CD4-positive, alpha-beta T cell (primary cell): ENCODE measurements at regions of chr3 and their contacts with region 1.

Region 1: DNA sequence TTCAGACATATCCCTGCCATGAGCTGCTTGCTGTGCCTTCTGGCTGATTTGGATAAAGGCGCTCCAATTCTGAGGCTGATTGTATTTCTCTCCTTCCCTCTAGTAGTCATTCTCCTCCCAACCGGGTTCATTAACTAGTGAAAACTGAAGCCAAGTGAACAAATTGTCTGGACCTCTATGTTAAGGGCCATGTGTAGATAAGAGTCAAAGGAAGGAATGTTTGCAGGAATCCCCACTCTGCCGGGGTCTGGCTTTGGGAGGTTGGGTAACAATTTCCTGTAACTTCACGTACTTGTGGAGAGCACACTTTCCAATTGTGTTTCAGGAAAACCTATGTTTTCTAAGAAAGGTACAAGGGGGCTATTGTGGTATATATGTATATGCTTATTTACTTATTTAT is 38.2 kb upstream of the SUCLG2 start:
- DNase-seq: no peak
- ATAC-seq: no peak
- H3K4me3 ChIP-seq: no peak overlapping the region
- H3K4me3 Mint-ChIP-seq: no peak overlapping the region
- H3K27ac ChIP-seq: no peak overlapping the region
- H3K27ac Mint-ChIP-seq: no peak overlapping the region
- H3K4me1 ChIP-seq: no peaks in the 10 kb centered on the region
- H3K4me1 Mint-ChIP-seq: no peaks in the 10 kb centered on the region
- H3K27me3 ChIP-seq: no peaks in the 10 kb centered on the region
- H3K27me3 Mint-ChIP-seq: no peaks in the 10 kb centered on the region
- CTCF ChIP-seq: no peak

Region 2: GRCh38 chr3:66554178-66554577 is 1138.4 kb before region 1 on chr3:
- CTCF ChIA-PET with region 1: no interaction called
- POLR2A ChIA-PET with region 1: no interaction called
- intact Hi-C with region 1: no loop called
- DNase-seq: no peak
- ATAC-seq: no peak
- H3K4me3 ChIP-seq: no peak overlapping the region
- H3K4me3 Mint-ChIP-seq: no peak overlapping the region
- H3K27ac ChIP-seq: no peak overlapping the region
- H3K27ac Mint-ChIP-seq: no peak overlapping the region
- H3K4me1 ChIP-seq: no peaks in the 10 kb centered on the region
- H3K4me1 Mint-ChIP-seq: no peaks in the 10 kb centered on the region
- H3K27me3 ChIP-seq: no peaks in the 10 kb centered on the region
- H3K27me3 Mint-ChIP-seq: peaks cover 5% of the 10 kb centered on the region
- CTCF ChIP-seq: no peak

Region 3: DNA sequence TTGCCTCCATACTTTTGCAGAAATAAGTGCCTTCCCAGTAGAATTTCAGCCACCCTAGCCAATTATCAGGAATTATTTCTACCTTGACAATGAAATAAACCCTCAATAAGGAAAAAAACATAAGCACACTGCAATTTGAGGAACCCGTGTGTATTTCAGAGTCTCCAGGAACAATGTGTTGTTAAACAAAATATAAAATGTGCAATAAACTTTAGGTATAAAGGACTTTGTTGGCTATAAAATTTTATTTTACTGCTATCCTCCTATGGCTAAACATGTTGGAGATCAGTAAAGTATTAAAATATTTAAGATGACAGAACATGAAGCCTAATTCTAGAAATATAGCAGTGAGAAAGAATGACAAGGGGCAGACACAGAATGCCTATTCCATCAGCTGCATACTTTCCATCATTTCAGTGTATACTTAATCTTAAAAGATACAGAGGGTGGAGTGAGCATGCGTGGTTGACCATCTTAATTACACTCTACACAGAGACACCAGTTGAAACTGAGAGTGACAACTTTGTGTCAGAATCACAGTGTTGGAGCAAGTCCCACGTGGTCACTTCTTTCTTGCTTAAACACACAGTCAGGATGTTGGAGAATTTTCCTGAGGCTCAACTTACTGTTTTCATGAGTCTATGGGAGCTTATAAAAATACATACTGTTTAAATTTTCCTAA is 40.8 kb after region 1 on chr3:
- CTCF ChIA-PET with region 1: no interaction called
- POLR2A ChIA-PET with region 1: no interaction called
- intact Hi-C with region 1: loop called in 1 of 2 experiments (anchors 5 kb)
- DNase-seq: no peak
- ATAC-seq: no peak
- H3K4me3 ChIP-seq: no peak overlapping the region
- H3K4me3 Mint-ChIP-seq: no peak overlapping the region
- H3K27ac ChIP-seq: no peak overlapping the region
- H3K27ac Mint-ChIP-seq: no peak overlapping the region
- H3K4me1 ChIP-seq: peaks cover 21% of the 10 kb centered on the region
- H3K4me1 Mint-ChIP-seq: peaks cover 52% of the 10 kb centered on the region
- H3K27me3 ChIP-seq: no peaks in the 10 kb centered on the region
- H3K27me3 Mint-ChIP-seq: no peaks in the 10 kb centered on the region
- CTCF ChIP-seq: no peak